ENCODE measurements at regions of chr20 and their contacts with region 1.

Region 1: GRCh38 chr20:13546497-13547131 is 92.1 kb downstream of the TASP1 start:
- DNase-seq: peak; percentile 86
- H3K4me3 Mint-ChIP-seq: no peak overlapping the region
- H3K27ac Mint-ChIP-seq: no peak overlapping the region
- H3K4me1 Mint-ChIP-seq: no peaks in the 10 kb centered on the region
- H3K27me3 Mint-ChIP-seq: no peaks in the 10 kb centered on the region

Region 2: DNA sequence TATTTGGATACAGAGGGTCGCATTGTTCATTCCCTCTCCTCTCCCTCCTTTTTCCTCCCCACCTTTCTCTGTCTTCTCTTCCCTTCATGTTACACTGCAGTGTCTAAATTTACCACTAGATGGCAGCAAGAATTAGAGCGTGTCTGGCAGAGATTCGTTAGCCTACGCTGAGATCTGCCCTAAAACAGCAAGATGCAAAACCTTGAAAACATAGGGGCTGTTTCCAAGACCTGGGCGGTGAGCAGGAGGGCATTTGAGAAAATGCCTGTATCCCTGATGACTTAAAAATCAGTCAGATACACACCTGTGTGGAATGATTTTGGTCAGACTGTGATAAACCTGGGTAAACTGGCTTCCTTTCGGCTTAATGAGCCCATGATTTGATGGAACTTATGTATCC is 427.0 kb before region 1 on chr20:
- CTCF ChIA-PET with region 1: interaction called, 31 read pairs
- intact Hi-C with region 1: loop called (anchors 1 kb)
- DNase-seq: peak; percentile 43
- H3K4me3 Mint-ChIP-seq: no peak overlapping the region
- H3K27ac Mint-ChIP-seq: no peak overlapping the region
- H3K4me1 Mint-ChIP-seq: no peaks in the 10 kb centered on the region
- H3K27me3 Mint-ChIP-seq: no peaks in the 10 kb centered on the region

Region 3: GRCh38 chr20:13302647-13303450 is 243.8 kb before region 1 on chr20:
- CTCF ChIA-PET with region 1: interaction called, 3 read pairs
- intact Hi-C with region 1: loop called (anchors 1 kb)
- DNase-seq: peak; percentile 67
- H3K4me3 Mint-ChIP-seq: no peak overlapping the region
- H3K27ac Mint-ChIP-seq: no peak overlapping the region
- H3K4me1 Mint-ChIP-seq: no peaks in the 10 kb centered on the region
- H3K27me3 Mint-ChIP-seq: no peaks in the 10 kb centered on the region

Region 4: DNA sequence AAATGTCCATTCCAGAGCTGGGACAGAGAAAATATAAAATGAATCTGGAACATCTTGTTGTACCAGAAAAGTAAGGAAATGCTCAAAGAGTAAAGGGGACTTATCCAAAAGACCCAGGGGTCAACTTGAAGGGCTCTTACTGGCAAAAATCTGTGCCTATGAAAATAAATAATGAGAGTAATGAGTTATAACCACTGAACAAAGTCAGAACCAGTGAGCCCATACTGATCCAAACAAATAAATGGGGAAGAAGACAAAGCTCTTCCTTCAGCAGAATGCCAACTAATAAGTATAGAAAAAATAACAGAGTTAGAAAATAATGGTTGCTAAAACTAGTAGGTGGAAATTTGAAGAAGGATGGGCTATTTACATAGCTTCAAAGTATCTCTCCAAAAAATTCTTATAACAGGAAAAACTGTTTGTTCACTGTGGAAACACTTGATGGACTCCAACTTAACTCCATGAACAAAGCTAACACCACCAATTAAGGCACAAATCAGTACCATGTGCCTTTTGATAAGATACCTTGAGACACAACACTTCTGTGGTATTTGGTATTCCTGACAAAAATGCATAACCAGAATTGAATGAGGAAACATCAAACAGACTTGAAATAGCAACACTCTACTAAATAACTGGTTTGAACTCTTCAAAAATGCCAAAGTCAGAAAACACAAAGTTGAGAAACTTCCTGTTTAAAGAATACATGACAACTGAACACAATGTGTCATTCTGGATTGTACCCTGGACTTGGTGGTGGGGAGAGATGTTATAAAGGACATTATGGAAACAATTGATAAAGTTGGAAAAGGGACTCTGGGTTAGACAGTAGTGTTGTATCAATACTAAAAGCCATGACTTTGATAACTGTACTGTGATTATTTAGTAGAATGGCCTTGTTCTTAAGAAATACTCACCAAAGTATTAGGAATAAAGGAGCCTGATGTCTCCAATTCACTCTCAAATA is 128.1 kb before region 1 on chr20:
- CTCF ChIA-PET with region 1: no interaction called
- intact Hi-C with region 1: no loop called
- DNase-seq: no peak
- H3K4me3 Mint-ChIP-seq: no peak overlapping the region
- H3K27ac Mint-ChIP-seq: no peak overlapping the region
- H3K4me1 Mint-ChIP-seq: no peaks in the 10 kb centered on the region
- H3K27me3 Mint-ChIP-seq: no peaks in the 10 kb centered on the region

Region 5: DNA sequence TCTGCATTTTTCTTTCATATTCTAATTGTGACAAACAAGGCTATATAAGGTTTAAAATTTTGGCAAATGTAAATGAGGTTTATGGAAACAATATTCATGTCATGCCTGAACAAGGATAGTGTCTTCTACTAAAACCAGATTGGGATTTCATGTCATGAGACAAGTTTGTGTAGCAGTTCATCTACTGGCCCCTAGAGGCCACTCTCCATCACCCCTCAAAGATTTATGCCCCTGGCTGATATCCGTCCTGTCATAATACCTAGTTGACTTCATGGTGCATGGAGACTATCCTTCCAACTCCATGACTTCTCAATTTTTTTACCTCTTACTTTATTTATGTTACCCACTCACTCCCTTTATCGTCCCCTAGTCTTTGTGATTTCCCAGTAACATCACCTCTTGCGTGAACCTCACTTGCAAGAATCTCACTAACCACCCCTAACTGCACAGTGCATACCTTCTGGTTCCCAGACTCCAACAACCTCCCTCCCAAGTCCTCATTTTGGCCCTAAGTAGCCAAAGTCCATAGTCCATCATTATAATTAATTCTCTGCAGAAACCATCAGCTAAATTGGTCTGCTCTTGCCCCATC is 87.7 kb before region 1 on chr20:
- CTCF ChIA-PET with region 1: interaction called, 20 read pairs
- intact Hi-C with region 1: loop called (anchors 2 kb)
- DNase-seq: peak; percentile 21
- H3K4me3 Mint-ChIP-seq: no peak overlapping the region
- H3K27ac Mint-ChIP-seq: no peak overlapping the region
- H3K4me1 Mint-ChIP-seq: no peaks in the 10 kb centered on the region
- H3K27me3 Mint-ChIP-seq: no peaks in the 10 kb centered on the region

Region 6: GRCh38 chr20:13771853-13772453 is 225.3 kb after region 1 on chr20:
- CTCF ChIA-PET with region 1: interaction called, 4 read pairs
- intact Hi-C with region 1: loop called (anchors 5 kb)
- DNase-seq: no peak
- H3K4me3 Mint-ChIP-seq: no peak overlapping the region
- H3K27ac Mint-ChIP-seq: no peak overlapping the region
- H3K4me1 Mint-ChIP-seq: peaks cover 18% of the 10 kb centered on the region
- H3K27me3 Mint-ChIP-seq: no peaks in the 10 kb centered on the region

Region 7: DNA sequence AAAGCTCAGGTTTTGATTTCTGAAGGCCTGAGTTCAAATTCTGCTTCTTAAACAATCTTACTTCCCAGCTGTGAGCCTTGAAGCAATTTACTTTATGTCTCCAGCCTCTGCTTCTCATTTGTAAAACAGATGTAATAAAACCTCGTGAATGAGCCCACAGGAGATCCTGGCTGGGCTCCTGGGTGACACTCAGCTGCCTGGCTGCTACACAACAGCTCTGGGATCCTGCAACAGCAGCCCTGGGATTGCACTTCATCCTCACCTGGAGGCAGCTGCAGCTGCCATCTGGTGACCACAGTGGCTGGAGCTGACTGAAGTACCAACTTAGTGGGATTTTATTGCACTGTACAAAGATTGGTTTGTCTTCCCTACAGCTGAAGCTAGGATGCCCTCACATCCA is 336.8 kb after region 1 on chr20:
- CTCF ChIA-PET with region 1: no interaction called
- intact Hi-C with region 1: no loop called
- DNase-seq: no peak
- H3K4me3 Mint-ChIP-seq: no peak overlapping the region
- H3K27ac Mint-ChIP-seq: no peak overlapping the region
- H3K4me1 Mint-ChIP-seq: no peaks in the 10 kb centered on the region
- H3K27me3 Mint-ChIP-seq: peaks cover 8% of the 10 kb centered on the region

Measured in activated naive CD4-positive, alpha-beta T cell treated with anti-CD3 and anti-CD28 coated beads for 36 hours (primary cell).